T-cell (primary cell): ENCODE measurements at regions of chr4 and their contacts with region 1.

Region 1: GRCh38 chr4:111216791-111217190 is 593.9 kb upstream of the PITX2 start:
- DNase-seq: no peak
- ATAC-seq: no peak
- H3K4me3 ChIP-seq: no peak overlapping the region
- H3K4me3 Mint-ChIP-seq: no peak overlapping the region
- H3K27ac ChIP-seq: no peak overlapping the region
- H3K27ac Mint-ChIP-seq: no peak overlapping the region
- H3K4me1 ChIP-seq: no peaks in the 10 kb centered on the region
- H3K4me1 Mint-ChIP-seq: no peaks in the 10 kb centered on the region
- H3K27me3 ChIP-seq: no peaks in the 10 kb centered on the region
- H3K27me3 Mint-ChIP-seq: no peaks in the 10 kb centered on the region

Region 2: GRCh38 chr4:111230265-111230664 is 13.5 kb after region 1 on chr4:
- CTCF ChIA-PET with region 1: interaction called in 1 of 2 experiments, 10 read pairs
- POLR2A ChIA-PET with region 1: no interaction called
- DNase-seq: no peak
- ATAC-seq: no peak
- H3K4me3 ChIP-seq: no peak overlapping the region
- H3K4me3 Mint-ChIP-seq: no peak overlapping the region
- H3K27ac ChIP-seq: no peak overlapping the region
- H3K27ac Mint-ChIP-seq: no peak overlapping the region
- H3K4me1 ChIP-seq: no peaks in the 10 kb centered on the region
- H3K4me1 Mint-ChIP-seq: no peaks in the 10 kb centered on the region
- H3K27me3 ChIP-seq: peaks cover 0 to 2% of the 10 kb centered on the region in 2 experiments
- H3K27me3 Mint-ChIP-seq: no peaks in the 10 kb centered on the region